ENCODE measurements at regions of chr4 and their contacts with region 1.

Region 1: DNA sequence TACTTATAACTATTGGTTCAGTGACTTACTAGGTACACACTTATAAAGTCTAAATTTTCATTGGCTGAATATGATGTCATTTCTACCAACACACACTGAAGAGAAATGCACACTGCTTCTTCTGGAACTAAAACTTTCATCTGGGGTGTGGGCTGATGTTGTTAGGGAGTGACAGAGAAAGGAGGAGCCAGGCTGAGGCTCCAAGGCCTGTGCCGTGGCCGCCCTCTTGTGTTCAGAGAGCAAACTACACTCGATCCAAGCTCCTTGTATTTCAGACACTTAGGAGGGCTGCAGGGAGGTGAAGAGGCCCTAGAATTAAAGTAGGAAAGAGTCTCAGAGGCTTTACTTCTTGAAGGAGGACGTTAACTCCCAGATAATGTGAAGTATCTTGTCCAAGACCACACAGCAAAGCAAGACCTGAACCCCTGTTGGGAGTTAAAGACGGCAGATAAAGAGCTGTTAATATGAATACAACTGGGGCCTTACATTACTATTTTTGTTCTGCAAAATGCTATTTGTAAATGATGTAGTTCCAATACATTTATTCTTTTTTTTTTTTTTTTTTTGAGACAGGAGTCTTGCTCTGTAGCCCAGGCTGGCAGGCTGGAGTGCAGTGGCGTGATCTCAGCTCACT is 137.5 kb downstream of the AFAP1 start:
- DNase-seq: peak; percentile 45
- ATAC-seq: peak; percentile 66
- H3K4me3 ChIP-seq: no peak overlapping the region
- H3K27ac ChIP-seq: no peak overlapping the region
- H3K4me1 ChIP-seq: peaks cover 44% of the 10 kb centered on the region
- H3K27me3 ChIP-seq: no peaks in the 10 kb centered on the region
- CTCF ChIP-seq: peak; percentile 92

Region 2: DNA sequence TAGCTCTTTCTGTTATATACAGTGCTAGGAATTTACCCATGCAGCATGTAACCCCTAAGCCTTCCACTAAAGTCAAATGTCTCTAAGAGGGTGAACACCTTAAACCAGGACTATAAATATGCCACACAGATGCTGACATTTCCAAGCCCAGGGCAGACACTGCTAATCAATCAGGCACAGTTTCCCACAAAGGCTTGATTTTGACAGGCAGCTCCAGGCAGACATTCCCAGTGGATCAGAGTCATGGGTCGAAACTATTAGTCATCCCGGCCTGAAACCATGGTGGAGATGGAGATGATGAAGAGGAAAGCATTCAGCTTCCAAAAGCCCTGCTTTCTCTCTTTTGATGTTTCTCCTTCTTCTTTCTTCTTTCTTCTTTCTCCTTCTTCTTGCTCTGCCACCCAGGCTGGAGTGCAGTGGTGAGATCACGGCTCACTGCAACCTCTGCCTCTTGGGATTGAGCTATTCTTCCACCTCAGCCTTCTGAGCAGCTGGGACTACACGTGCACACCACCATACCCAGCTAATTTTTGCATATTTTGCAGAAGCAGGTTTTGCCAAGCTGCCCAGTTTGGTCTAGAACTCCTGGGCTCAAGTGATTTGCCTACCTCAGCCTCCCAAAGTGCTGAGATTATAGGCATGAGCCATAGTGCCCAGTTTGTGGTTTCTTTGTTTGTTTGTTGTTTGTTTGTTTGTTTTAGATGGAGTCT is 630.9 kb before region 1 on chr4:
- CTCF ChIA-PET with region 1: no interaction called
- POLR2A ChIA-PET with region 1: no interaction called
- in situ Hi-C with region 1: no loop called
- intact Hi-C with region 1: no loop called
- DNase-seq: no peak
- ATAC-seq: no peak
- H3K4me3 ChIP-seq: no peak overlapping the region
- H3K27ac ChIP-seq: no peak overlapping the region
- H3K4me1 ChIP-seq: no peaks in the 10 kb centered on the region
- H3K27me3 ChIP-seq: no peaks in the 10 kb centered on the region
- CTCF ChIP-seq: no peak

Region 3: DNA sequence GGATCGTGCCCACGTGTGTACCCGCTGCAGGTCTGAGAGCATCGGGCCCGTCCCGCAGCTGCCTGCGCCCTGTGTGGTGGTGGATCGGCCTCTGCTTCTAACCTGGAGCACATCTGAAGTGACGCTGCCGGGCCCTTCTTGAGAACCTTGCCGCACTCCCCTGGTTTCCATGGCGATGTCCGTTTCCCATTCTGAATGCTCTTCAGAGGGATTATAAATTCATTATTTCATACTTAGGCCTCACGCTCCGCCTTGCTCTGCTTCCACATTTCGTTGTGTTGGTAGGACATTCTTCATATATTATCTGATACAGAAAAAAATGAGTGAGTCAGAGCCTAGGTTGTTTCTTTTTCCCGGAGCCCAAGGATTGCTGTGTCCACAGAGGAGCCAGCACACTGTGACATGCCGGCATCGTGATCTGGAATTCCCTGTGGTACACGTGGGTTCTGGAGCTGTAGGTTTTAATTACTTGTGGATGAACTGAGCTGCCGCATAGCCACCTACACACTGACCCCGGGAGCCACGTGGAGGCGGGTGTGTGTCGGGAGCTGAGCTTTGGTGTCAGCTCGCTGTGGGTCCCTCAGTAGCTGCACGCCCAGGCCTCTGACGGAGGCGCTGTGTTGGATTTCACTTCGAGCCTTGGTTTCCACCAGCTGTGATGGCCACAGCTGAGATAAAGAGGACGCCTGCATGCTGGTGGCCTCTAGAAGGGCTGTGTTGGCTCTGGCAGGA is 430.8 kb before region 1 on chr4:
- CTCF ChIA-PET with region 1: no interaction called
- POLR2A ChIA-PET with region 1: no interaction called
- in situ Hi-C with region 1: no loop called
- intact Hi-C with region 1: no loop called
- DNase-seq: no peak
- ATAC-seq: no peak
- H3K4me3 ChIP-seq: no peak overlapping the region
- H3K27ac ChIP-seq: no peak overlapping the region
- H3K4me1 ChIP-seq: no peaks in the 10 kb centered on the region
- H3K27me3 ChIP-seq: no peaks in the 10 kb centered on the region
- CTCF ChIP-seq: no peak

Region 4: DNA sequence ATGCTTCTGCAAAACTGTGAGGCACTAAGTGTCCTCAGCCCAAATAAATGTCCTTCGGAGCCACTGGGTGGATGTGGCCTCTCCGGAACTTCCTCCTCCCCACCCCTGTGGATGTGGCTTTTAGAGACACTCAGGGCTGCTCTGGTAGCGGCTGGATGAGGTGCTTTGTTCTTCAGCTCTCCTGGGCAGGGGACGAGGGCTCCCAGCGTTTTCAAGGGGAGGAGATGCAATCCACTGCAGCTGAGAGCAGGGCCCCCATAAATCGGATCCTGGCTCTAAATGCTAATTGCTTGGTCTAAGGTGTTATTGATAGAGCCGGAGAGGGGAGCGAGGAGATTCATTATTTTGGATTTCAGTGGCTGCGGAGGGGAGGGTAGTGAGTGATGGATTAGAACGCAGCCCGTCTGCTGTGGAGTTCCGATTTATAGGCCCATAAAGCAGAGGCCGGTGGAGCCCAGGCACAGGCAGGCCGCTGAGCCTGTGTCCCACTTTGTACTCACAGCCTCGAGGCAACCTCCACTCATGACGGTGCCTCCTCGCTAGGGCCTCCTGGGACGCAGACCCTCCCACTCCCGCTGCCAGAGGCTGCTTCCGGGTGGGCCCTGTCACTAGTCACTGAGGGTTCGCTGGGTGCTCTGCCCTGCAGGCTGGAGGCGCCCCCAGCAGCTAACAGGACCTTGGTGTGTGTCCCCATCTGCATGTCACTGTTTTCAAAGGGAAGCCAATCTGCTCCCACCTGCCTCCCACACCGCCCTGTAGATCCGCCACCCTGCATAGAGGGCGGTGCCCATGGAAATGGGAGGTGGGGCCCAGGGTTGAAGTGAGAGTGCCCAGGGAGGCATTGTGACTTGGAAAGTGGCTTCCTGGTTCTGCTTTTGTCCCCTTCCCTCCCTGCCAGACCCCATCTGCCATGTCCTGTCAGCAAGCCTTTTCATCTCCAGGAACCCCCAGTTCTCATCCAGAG is 232.1 kb before region 1 on chr4:
- CTCF ChIA-PET with region 1: no interaction called
- POLR2A ChIA-PET with region 1: no interaction called
- in situ Hi-C with region 1: no loop called
- intact Hi-C with region 1: no loop called
- DNase-seq: no peak
- ATAC-seq: no peak
- H3K4me3 ChIP-seq: no peak overlapping the region
- H3K27ac ChIP-seq: no peak overlapping the region
- H3K4me1 ChIP-seq: no peaks in the 10 kb centered on the region
- H3K27me3 ChIP-seq: no peaks in the 10 kb centered on the region
- CTCF ChIP-seq: no peak

Region 5: GRCh38 chr4:7987148-7987989 is 185.2 kb after region 1 on chr4:
- CTCF ChIA-PET with region 1: interaction called, 4 read pairs
- POLR2A ChIA-PET with region 1: no interaction called
- in situ Hi-C with region 1: no loop called
- intact Hi-C with region 1: loop called (anchors 2 kb)
- DNase-seq: peak; percentile 51
- ATAC-seq: peak; percentile 82
- H3K4me3 ChIP-seq: no peak overlapping the region
- H3K27ac ChIP-seq: peak overlapping the region; percentile 69; the same call in 1 of the 2 replicates
- H3K4me1 ChIP-seq: peaks cover 32% of the 10 kb centered on the region
- H3K27me3 ChIP-seq: no peaks in the 10 kb centered on the region
- CTCF ChIP-seq: peak; percentile 84

Region 6: DNA sequence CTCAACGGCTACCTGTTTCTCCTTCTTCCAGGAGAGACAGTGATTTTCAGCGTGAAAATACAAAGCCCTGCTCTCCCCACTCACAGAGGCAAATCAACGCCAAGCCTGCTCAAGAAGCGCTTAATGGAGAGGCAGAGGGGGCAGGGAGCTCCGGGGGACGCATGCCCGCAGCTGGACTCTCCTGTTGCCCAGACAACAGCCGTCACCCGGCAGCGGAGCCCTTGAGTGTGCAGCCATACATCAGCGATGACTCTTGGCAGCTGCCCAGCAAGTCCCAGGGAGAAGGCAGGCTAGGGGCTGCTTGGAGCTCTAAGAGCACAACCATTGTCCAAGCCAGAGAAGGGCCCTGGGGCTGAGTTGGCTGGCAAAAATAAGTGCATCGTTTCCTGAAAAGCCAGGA is 208.4 kb after region 1 on chr4:
- CTCF ChIA-PET with region 1: no interaction called
- POLR2A ChIA-PET with region 1: no interaction called
- in situ Hi-C with region 1: no loop called
- intact Hi-C with region 1: no loop called
- DNase-seq: no peak
- ATAC-seq: no peak
- H3K4me3 ChIP-seq: no peak overlapping the region
- H3K27ac ChIP-seq: no peak overlapping the region
- H3K4me1 ChIP-seq: no peaks in the 10 kb centered on the region
- H3K27me3 ChIP-seq: no peaks in the 10 kb centered on the region
- CTCF ChIP-seq: no peak

Region 7: GRCh38 chr4:8252301-8253173 is 450.3 kb after region 1 on chr4:
- CTCF ChIA-PET with region 1: interaction called, 10 read pairs
- POLR2A ChIA-PET with region 1: no interaction called
- in situ Hi-C with region 1: no loop called
- intact Hi-C with region 1: no loop called
- DNase-seq: no peak
- ATAC-seq: no peak
- H3K4me3 ChIP-seq: no peak overlapping the region
- H3K27ac ChIP-seq: no peak overlapping the region
- H3K4me1 ChIP-seq: no peaks in the 10 kb centered on the region
- H3K27me3 ChIP-seq: no peaks in the 10 kb centered on the region
- CTCF ChIP-seq: no peak